H1 (cell line): ENCODE measurements at regions of chr16 and their contacts with region 1.

Region 1: DNA sequence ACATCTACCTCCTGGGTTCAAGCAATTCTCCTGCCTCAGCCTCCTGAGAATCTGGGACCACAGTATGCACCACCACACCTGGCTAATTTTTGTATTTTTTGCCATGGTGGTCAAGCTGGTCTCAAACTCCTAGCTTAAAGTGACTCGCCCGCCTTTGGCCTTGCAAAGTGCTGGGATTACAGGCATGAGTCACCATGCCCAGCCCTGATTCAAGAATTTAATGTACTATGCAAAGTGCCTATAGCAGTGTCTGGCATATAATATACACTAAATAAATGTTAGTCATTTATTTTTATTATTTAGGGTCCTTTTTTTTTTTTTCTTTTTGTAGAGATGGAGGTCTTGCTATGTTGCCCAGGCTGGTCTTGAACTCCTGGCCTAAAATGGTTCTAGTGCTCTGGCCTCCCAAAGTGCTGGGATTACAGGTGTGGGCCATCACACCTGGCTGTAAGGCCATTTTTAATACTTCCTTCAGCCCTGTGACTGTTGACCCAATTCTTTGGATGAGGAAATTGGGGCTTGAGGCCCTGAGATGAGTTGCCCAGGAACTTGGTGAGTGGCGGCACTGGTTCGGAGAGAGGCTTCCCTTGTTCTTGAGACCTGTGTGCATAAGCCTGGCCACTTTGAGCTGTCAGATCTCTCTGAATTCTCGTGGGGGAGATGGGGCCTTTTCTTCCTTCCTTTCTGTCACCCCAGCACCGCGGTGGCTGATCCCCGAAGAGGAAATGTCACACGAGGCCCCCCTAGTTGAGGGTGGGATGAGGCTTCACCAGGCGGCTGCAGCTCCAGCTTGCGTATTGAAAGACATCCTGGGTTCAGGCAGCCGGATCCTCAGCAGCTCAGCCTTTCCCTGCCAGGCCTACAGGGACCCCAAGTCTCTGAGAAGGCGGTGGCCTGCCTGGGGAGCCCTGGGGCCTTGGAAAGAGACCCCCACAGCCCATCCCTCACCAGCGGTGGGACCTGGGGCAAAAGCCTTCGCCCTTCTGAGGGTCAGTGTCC is 38.7 kb downstream of the LAT start:
- DNase-seq: no peak
- H3K4me3 ChIP-seq: no peak overlapping the region
- H3K27ac ChIP-seq: no peak overlapping the region
- H3K4me1 ChIP-seq: peaks cover 0 to 1% (median 0%) of the 10 kb centered on the region in 4 experiments; a peak in 3 of 7 replicates
- H3K27me3 ChIP-seq: no peaks in the 10 kb centered on the region
- CTCF ChIP-seq: no peak
- EP300 ChIP-seq: no peak
- POLR2A ChIP-seq: no peak
- RAD21 ChIP-seq: no peak

Region 2: DNA sequence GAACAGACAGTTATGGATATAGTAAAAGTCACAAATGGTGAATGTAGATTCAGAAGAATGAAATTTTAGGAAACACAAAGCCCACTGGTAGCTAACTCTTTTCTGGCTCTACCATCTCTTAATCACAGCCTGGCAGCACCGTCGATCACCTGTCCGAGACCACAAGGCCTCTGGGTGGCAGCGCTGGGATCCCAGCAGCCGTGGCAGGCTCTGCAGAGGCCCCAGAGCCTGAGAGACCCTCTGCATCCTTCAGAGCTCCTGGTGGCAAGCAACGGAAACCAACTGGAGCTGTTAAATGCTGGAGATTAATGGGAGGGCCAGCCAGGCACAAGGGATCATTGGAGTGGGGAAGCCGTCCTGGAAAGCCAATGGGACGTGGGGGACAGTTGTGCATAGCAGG is 12.5 kb before region 1 on chr16:
- CTCF ChIA-PET with region 1: interaction called, 15 read pairs
- POLR2A ChIA-PET with region 1: no interaction called
- DNase-seq: peak; percentile 19 to 61
- H3K4me3 ChIP-seq: no peak overlapping the region
- H3K27ac ChIP-seq: no peak overlapping the region
- H3K4me1 ChIP-seq: peaks cover 0 to 1% (median 0%) of the 10 kb centered on the region in 4 experiments; a peak in 2 of 7 replicates
- H3K27me3 ChIP-seq: no peaks in the 10 kb centered on the region
- CTCF ChIP-seq: peak; percentile 63 to 66 (median 64)
- EP300 ChIP-seq: no peak
- POLR2A ChIP-seq: no peak
- RAD21 ChIP-seq: peak; percentile 56 to 66